ENCODE measurements at regions of chr10 and their contacts with region 1.

Region 1: GRCh38 chr10:26486991-26487850 is 49.1 kb downstream of the APBB1IP start:
- DNase-seq: peak; percentile 90
- H3K4me3 Mint-ChIP-seq: peak overlapping the region; percentile 76
- H3K27ac Mint-ChIP-seq: peak overlapping the region; percentile 96
- H3K4me1 Mint-ChIP-seq: peaks cover 52% of the 10 kb centered on the region
- H3K27me3 Mint-ChIP-seq: no peaks in the 10 kb centered on the region

Region 2: DNA sequence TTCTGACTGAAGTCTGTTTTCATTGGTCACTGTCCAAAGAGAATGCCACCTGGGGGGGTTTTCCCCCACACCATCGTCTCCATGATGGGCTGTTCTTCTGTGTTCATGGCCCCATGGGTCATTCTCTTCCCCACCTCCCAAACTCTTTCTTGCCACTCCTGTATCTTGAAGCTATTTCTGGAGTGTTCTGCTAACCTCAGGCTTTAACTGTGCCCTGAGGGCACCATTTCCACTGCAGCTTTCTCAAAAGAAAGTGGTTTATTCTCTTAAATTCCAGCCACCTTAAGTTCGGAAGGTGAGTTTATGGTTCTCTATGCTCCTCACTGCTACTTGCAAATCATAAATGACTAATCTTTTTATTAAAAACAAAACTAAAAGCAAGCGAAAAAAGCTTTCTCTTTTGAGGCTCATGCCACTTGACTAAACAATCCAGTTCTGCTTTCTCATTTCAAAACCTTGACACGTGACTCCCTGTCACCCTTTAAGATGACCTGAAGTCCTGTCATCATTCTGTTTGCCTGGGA is 56.5 kb before region 1 on chr10:
- intact Hi-C with region 1: loop called (anchors 1 kb)
- DNase-seq: peak; percentile 82
- H3K4me3 Mint-ChIP-seq: peak overlapping the region; percentile 48
- H3K27ac Mint-ChIP-seq: peak overlapping the region; percentile 87
- H3K4me1 Mint-ChIP-seq: peaks cover 12% of the 10 kb centered on the region
- H3K27me3 Mint-ChIP-seq: no peaks in the 10 kb centered on the region

Region 3: DNA sequence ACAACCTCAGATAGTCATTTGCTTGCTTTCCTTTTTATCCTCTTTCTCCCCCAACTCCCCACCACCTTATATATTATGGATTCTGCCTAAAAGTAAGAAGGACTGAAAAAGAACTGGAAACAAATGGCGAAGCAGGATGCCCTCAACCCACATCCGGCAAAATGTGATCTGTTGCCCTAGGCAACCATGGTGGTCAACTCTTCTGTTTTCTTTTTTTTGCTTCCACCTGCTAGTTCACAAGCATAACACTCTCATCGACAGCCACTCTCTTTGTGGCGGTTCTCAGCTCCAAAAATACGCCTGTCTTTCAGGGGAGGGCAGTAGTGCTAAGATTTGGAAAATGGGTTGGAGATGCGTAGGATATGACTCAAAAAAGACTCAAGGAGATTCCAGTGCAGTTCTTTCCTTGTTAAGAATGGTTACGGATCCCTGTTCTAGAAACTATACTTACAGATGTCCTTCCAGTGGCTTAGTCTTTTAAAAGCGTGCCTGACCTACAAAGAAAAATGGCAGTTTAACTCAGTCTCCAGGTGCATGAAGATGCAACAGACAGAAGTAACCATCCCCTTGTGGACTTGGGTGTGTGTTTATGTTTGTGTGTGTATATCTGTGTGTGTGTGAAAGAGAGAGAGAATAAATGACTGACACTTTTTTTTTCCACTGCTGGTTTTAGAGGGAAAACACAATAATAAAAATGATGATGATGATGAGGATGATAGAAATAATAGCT is 38.4 kb before region 1 on chr10:
- intact Hi-C with region 1: loop called (anchors 1 kb)
- DNase-seq: peak; percentile 95
- H3K4me3 Mint-ChIP-seq: peak overlapping the region; percentile 80
- H3K27ac Mint-ChIP-seq: peak overlapping the region; percentile 97
- H3K4me1 Mint-ChIP-seq: peaks cover 73% of the 10 kb centered on the region
- H3K27me3 Mint-ChIP-seq: no peaks in the 10 kb centered on the region

Region 4: DNA sequence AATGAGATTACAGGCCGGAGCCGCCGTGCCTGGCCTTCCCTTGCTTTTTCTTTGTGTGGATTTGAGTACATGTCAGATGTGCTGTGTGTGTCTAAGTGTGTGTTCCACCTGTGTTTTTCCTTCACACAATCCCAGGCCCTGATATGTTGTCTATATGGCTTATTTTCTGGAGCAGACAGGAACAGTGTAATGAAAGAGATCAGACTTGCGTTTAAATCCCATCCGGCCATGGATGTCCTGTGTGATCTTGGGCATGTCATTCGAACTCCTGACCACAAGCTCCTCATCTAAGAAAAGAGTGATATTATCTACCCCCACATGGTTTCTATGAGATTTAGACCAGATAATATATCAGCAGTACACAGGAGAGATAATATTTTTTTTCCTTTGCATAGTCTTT is 11.8 kb before region 1 on chr10:
- intact Hi-C with region 1: loop called (anchors 1 kb)
- DNase-seq: peak; percentile 74
- H3K4me3 Mint-ChIP-seq: peak overlapping the region; percentile 65
- H3K27ac Mint-ChIP-seq: peak overlapping the region; percentile 84
- H3K4me1 Mint-ChIP-seq: peaks cover 69% of the 10 kb centered on the region
- H3K27me3 Mint-ChIP-seq: no peaks in the 10 kb centered on the region

Region 5: DNA sequence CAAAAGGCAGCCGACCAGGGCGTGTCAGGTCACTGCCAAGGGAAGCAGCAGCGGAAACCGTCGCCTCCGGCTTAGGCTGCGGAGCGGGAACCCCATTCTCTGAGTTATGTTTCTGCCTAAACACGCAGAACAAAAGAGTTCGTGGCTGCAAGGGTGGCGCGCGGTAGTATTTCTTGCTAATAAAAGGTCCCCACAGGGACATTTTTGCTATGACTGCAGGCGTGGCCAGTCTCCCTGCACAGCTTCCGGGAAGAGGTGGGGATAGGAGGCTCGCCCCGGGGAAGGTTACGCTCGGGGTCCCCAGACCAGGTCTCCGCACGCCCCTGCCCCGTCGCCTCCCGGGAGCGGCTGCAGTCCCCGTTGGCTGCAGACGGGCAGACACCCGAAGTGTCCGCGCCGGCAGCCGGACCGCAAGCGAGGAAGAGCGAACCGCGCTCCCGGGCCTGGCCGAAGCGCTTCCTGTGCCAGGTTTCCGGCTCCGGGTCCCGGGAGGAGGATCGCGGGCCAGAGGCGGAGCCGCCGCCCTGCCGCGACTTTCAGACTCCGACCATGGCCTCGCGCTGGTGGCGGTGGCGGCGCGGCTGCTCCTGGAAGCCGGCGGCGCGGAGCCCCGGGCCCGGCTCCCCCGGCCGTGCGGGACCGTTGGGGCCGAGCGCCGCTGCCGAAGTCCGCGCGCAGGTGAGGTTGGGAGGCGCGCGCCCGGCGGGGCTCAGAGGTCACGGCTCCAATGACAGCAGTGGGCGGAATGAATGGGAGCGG is 210.1 kb after region 1 on chr10 and contains the start of gene PDSS1:
- intact Hi-C with region 1: loop called (anchors 5 kb)
- DNase-seq: peak; percentile 92
- H3K4me3 Mint-ChIP-seq: peak within 1 kb of the TSS; percentile 99
- H3K27ac Mint-ChIP-seq: peak within 1 kb of the TSS; percentile 97
- H3K4me1 Mint-ChIP-seq: peaks cover 31% of the 10 kb centered on the region
- H3K27me3 Mint-ChIP-seq: no peaks in the 10 kb centered on the region
- total RNA-seq, gene PDSS1: 39.0 and 39.8 TPM in 2 replicates

Region 6: GRCh38 chr10:26860443-26861204 is 373.4 kb after region 1 on chr10 and contains the start of gene ABI1:
- intact Hi-C with region 1: loop called (anchors 10 kb)
- DNase-seq: peak; percentile 99
- H3K4me3 Mint-ChIP-seq: peak within 1 kb of the TSS; percentile 88
- H3K27ac Mint-ChIP-seq: peak within 1 kb of the TSS; percentile 98
- H3K4me1 Mint-ChIP-seq: peaks cover 32% of the 10 kb centered on the region
- H3K27me3 Mint-ChIP-seq: peaks cover 10% of the 10 kb centered on the region
- total RNA-seq, gene ABI1: 54.5 and 55.7 TPM in 2 replicates

Region 7: GRCh38 chr10:28334296-28334695 is 1847.1 kb after region 1 on chr10:
- intact Hi-C with region 1: loop called (anchors 1 kb)
- DNase-seq: peak; percentile 92
- H3K4me3 Mint-ChIP-seq: peak overlapping the region; percentile 91
- H3K27ac Mint-ChIP-seq: peak overlapping the region; percentile 100
- H3K4me1 Mint-ChIP-seq: peaks cover 46% of the 10 kb centered on the region
- H3K27me3 Mint-ChIP-seq: peaks cover 9% of the 10 kb centered on the region

Measured in activated CD4-positive, alpha-beta T cell treated with anti-CD3 and anti-CD28 coated beads, Interleukin-2, amount 10 ng/mL, durations not matched to agents 24 days and 14 days (primary cell).